ENCODE measurements at regions of chr2 and their contacts with region 1.

Region 1: GRCh38 chr2:227390465-227391256 is 2.9 kb upstream of the SCYGR1 start:
- DNase-seq: no peak
- ATAC-seq: no peak

Region 2: GRCh38 chr2:227370791-227371312 is 19.8 kb before region 1 on chr2:
- intact Hi-C with region 1: loop called (anchors 2 kb)
- DNase-seq: no peak
- ATAC-seq: peak; percentile 80

Measured in Right ventricle myocardium superior (tissue), 1 donor.